Activated CD8-positive, alpha-beta T cell treated with anti-CD3 and anti-CD28 coated beads for 36 hours (primary cell): ENCODE measurements at regions of chr6 and their contacts with region 1.

Region 1: GRCh38 chr6:99868074-99868702 is 125.8 kb downstream of the MCHR2 start:
- DNase-seq: peak; percentile 82
- ATAC-seq: peak; percentile 51
- H3K4me3 Mint-ChIP-seq: no peak overlapping the region
- H3K27ac Mint-ChIP-seq: no peak overlapping the region
- H3K4me1 Mint-ChIP-seq: peaks cover 4% of the 10 kb centered on the region
- H3K27me3 Mint-ChIP-seq: peaks cover 34% of the 10 kb centered on the region
- CTCF ChIP-seq: peak; percentile 80

Region 2: GRCh38 chr6:99838607-99839006 is 29.6 kb before region 1 on chr6:
- CTCF ChIA-PET with region 1: interaction called, 10 read pairs
- POLR2A ChIA-PET with region 1: no interaction called
- intact Hi-C with region 1: no loop called
- DNase-seq: no peak
- ATAC-seq: no peak
- H3K4me3 Mint-ChIP-seq: no peak overlapping the region
- H3K27ac Mint-ChIP-seq: no peak overlapping the region
- H3K4me1 Mint-ChIP-seq: no peaks in the 10 kb centered on the region
- H3K27me3 Mint-ChIP-seq: peaks cover 5% of the 10 kb centered on the region
- CTCF ChIP-seq: no peak

Region 3: DNA sequence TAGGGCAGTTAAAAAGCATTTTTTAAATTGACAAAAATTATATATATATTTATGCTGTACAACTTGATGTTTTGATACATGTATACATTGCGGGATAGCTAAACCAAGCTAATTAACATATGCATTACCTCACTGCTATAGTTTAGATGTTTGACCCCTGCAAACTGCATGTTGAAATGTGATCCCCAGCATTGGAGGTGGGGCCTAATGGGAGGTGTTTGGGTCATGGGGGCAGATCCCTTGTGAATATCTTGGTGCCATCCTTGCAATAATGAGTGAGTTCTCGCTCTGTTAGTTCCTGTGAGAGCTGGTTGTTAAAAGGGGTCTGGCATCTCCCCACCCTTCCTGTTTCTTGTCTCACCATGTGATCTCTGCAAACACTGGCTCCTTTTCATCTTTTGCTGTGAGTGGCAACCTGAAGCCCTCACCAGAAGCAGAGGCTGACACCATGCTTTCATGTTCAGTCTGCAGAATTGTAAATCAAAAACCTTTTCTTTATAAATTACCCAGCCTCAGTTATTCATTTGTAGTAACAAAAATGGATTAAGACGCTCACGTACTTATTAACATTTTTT is 14.0 kb after region 1 on chr6:
- CTCF ChIA-PET with region 1: interaction called, 22 read pairs
- POLR2A ChIA-PET with region 1: interaction called, 3 read pairs
- intact Hi-C with region 1: no loop called
- DNase-seq: no peak
- ATAC-seq: peak; percentile 34
- H3K4me3 Mint-ChIP-seq: no peak overlapping the region
- H3K27ac Mint-ChIP-seq: no peak overlapping the region
- H3K4me1 Mint-ChIP-seq: no peaks in the 10 kb centered on the region
- H3K27me3 Mint-ChIP-seq: no peaks in the 10 kb centered on the region
- CTCF ChIP-seq: no peak

Region 4: DNA sequence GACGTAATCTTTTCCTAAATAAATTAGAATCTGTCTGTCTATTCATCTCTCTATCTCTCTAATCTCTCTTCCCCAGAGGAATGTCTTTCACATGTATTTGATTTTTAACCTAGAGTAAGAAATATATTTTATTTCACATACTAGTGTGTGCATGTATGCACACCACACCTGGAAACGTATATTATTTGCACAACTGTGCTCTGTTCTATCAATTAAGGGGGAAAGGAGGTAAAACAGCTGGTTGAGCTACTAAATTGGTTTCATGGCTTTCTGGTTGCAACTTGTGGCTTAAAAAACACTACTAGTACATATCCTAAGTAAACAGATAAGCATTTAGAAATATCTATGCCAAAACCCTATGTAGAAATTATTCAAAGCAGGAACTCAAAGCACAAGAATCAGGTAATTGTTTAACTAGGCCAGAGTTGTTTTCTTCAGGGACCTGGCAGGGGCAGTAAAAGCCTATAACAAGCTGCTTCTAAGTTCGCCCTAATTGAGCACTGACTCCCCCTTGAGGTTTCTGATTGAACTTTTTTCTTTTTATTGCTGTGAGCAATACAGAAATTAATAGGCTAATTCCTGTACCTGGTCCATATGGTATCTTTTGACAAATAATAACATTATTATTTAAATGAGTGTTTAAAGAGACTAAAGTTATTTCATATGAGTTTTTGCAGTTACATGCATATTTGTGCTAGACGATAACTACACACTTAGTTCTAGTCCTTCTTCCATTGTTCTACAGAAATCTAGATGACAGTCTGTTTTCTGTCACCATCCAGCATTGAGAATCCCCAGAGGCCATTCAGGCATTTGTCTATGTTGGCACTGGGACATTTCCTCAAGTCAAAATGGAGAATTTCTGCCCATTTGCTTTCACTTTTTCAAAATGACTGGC is 37.3 kb after region 1 on chr6:
- CTCF ChIA-PET with region 1: interaction called, 26 read pairs
- POLR2A ChIA-PET with region 1: no interaction called
- intact Hi-C with region 1: loop called (anchors 1 kb)
- DNase-seq: peak; percentile 1
- ATAC-seq: peak; percentile 49
- H3K4me3 Mint-ChIP-seq: no peak overlapping the region
- H3K27ac Mint-ChIP-seq: no peak overlapping the region
- H3K4me1 Mint-ChIP-seq: no peaks in the 10 kb centered on the region
- H3K27me3 Mint-ChIP-seq: peaks cover 6% of the 10 kb centered on the region
- CTCF ChIP-seq: peak; percentile 75

Region 5: GRCh38 chr6:100084291-100084953 is 216.2 kb after region 1 on chr6:
- CTCF ChIA-PET with region 1: interaction called, 16 read pairs
- POLR2A ChIA-PET with region 1: no interaction called
- intact Hi-C with region 1: no loop called
- DNase-seq: no peak
- ATAC-seq: no peak
- H3K4me3 Mint-ChIP-seq: no peak overlapping the region
- H3K27ac Mint-ChIP-seq: no peak overlapping the region
- H3K4me1 Mint-ChIP-seq: no peaks in the 10 kb centered on the region
- H3K27me3 Mint-ChIP-seq: peaks cover 4% of the 10 kb centered on the region
- CTCF ChIP-seq: no peak

Region 6: GRCh38 chr6:100105138-100105753 is 237.1 kb after region 1 on chr6:
- CTCF ChIA-PET with region 1: interaction called, 74 read pairs
- POLR2A ChIA-PET with region 1: no interaction called
- intact Hi-C with region 1: no loop called
- DNase-seq: no peak
- ATAC-seq: no peak
- H3K4me3 Mint-ChIP-seq: no peak overlapping the region
- H3K27ac Mint-ChIP-seq: no peak overlapping the region
- H3K4me1 Mint-ChIP-seq: no peaks in the 10 kb centered on the region
- H3K27me3 Mint-ChIP-seq: peaks cover 13% of the 10 kb centered on the region
- CTCF ChIP-seq: no peak